Posterior cingulate gyrus (tissue), 11 donors: ENCODE measurements at regions of chr20 and their contacts with region 1.

Region 1: DNA sequence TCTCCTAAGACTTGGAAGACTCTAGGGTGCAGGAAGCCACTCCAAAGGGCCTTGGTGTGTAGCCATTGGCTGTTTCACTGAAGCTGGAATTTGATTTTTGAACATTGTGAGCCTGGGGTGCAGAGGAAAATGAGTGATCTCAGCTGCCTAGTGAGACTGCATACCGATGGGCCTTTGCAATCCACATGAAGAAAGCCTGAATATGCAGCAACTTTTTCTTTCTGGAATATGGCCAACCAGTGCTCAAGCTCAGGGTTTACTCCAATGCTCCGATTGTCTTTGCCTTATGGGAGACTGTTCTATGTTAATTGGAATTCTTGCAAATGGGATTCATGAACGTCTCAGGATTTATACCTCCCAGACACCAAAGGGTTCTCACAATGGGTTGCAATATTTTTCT is 242.6 kb downstream of the DOK5 start:
- DNase-seq: no peak

Region 2: GRCh38 chr20:54650052-54650719 is 67.8 kb before region 1 on chr20:
- intact Hi-C with region 1: no loop called
- DNase-seq: no peak

Region 3: DNA sequence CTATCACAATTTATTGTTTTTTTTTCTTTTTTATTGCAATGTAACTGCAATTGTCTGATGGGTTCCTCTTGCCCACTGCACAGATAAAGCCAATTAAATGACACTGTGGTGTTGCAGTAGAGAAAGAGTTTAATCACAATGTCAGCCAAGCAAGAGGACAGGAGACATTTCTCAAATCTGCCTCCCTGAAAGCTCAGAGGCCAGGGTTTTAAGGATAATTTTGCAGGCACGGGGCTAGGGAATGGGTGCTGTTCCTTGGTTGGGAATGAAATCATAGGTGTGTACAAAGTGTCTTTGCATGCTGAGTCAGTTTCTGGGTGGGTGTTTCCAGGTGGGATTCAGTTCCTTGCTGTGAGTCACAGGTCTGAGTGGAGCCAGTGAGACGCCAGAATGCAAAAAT is 28.8 kb after region 1 on chr20:
- intact Hi-C with region 1: no loop called
- DNase-seq: no peak

Region 4: GRCh38 chr20:54772913-54773642 is 55.1 kb after region 1 on chr20:
- intact Hi-C with region 1: loop called (anchors 10 kb)
- DNase-seq: no peak

Region 5: DNA sequence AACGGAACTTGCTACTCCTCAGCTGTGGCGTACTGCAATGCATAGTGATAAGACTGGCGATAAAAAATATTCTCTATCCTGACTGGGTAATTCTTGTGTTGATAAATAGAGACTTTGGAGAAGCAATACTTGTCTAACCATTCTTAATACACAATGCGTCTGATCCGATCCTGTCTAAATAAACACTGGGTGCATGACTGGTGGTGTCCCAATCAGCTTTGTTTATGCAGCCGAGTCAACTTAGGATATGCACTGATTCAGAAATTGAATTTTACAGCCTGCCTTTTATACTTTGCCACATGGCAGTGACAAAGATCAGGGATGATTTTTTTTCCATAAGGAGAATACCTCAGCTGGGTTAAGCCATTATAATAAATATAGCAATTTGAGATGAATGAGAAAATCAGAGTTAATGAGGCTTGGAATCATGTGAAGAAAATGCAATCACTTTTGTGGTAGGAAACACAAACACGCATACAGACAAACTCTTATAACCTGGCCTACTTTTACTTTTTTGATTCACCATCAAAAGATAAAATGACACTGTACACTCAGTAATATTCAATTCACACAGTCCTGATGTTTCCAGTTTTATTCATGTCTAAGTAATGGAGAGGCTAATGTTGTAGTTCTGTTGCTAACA is 145.2 kb after region 1 on chr20:
- intact Hi-C with region 1: no loop called
- DNase-seq: no peak

Region 6: GRCh38 chr20:54897515-54898186 is 179.7 kb after region 1 on chr20:
- intact Hi-C with region 1: no loop called
- DNase-seq: peak in 2 of 10 donors; percentile 50 to 56